RWPE1 (cell line): ENCODE measurements at regions of chrX and their contacts with region 1.

Region 1: GRCh38 chrX:152632445-152633097 is 5.1 kb upstream of the GABRQ start:
- DNase-seq: peak; percentile 16
- H3K27ac ChIP-seq: no peak overlapping the region
- CTCF ChIP-seq: peak; percentile 76

Region 2: GRCh38 chrX:151753313-151754041 is 879.1 kb before region 1 on chrX:
- CTCF ChIA-PET with region 1: interaction called, 18 read pairs
- POLR2A ChIA-PET with region 1: no interaction called
- DNase-seq: peak; percentile 61
- H3K27ac ChIP-seq: peak overlapping the region; percentile 94
- CTCF ChIP-seq: peak; percentile 78

Region 3: DNA sequence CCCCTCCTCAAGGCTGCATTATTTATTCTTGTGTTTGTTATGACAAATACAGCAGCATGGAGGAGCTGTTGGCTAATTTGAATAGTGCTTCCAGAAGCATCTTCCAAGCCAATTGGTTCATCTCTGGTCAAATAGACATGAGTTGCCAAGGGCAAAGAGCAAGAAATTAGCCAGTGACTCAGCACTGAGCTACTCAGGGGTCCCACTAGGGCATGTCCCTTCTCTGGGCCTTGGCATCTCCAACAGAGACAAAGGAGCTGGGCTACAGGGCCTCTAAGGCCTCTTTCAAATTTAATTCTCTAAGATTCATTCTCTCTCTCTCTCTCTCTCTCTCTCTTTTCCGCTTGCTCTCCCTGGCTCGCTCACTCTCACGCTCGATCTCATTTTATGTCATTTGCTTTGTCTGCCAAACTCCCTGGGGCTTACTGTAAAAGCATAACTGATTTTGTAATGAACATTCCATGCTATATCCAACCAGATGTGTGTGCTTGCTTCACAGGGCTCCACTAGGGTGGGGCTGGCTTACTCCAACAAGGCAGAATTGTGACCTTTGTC is 806.6 kb before region 1 on chrX:
- CTCF ChIA-PET with region 1: interaction called, 10 read pairs
- POLR2A ChIA-PET with region 1: no interaction called
- DNase-seq: peak; percentile 51
- H3K27ac ChIP-seq: peak overlapping the region; percentile 92
- CTCF ChIP-seq: no peak; the same call in 1 of the 2 replicates